OCI-LY7 (cell line): ENCODE measurements at regions of chr11 and their contacts with region 1.

Region 1: DNA sequence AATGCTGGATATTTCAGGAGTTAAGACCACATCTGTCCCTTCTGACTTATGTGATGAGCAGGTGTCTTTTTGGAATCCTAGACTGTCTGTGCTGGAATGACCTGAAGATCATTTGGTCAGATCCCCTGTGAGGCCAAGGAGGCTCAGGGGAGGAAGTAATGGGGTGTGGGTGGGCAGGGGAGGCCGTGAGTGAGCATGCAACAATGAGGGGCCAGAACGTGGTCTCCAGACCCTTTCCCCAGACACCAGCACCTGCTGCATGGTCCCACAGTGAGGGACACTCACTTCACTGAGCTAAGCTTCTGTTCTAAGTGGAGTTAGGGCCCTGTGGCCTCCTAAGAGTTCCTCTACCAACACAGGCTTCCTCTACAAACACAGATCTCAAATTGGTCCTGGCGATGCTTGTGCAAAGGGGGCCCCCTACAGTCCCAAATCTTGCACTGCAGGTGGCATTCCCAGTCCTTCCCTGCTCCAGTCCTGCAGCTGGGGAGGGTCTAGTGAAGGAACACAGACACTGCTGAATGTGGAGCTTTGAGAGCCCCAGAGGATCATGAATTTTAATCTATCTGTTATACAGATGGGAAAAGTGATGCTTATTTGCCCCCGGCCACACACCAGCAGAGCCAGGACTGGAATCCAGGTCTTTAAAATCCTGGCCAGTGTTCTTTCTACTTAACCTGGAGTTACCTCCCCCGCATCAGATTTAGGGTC is 7.4 kb downstream of the USP2 start:
- DNase-seq: peak; percentile 75
- H3K4me3 ChIP-seq: no peak overlapping the region
- H3K27ac ChIP-seq: peak overlapping the region; percentile 47
- H3K4me1 ChIP-seq: peaks cover 72% of the 10 kb centered on the region
- CTCF ChIP-seq: peak; percentile 98

Region 2: DNA sequence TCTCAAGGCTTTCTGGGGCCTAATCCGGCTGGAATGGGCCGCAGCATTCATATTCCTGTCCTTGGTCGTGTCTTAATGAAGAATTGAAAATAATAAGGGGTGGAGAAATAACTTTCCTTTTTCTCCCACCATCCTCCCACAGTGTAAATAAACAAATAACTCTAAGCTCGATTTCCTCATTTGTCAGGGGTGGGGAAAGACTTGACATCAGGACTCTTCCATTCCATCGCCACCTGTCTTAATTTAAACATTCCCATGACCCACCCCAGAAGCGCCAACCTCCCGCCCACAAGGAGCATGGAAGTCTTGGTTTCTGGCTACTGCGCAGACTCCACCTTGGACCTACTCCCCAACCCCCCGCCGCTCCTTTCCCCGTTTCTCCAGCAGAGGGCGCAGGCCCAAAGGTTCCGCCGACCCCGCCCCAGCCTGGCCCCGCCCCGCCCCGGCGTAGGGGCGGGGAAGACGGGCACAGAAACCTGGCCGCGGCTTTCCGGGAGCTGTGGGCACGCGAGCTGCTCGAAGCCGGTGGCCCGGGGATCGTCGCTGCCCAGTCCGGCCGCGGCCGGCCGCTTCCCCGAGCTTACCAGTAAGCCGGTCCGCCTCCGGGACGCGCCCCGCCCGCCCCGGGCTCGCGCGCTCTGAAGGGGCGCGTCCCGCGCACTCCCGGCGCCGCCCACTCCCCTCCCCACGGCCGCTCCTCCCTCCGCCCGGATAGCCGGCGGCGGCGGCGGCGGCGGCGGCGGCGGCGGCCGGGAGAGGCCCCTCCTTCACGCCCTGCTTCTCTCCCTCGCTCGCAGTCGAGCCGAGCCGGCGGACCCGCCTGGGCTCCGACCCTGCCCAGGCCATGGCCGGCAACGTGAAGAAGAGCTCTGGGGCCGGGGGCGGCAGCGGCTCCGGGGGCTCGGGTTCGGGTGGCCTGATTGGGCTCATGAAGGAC is 168.2 kb before region 1 on chr11 and contains the start of gene CBL:
- CTCF ChIA-PET with region 1: interaction called, 24 read pairs
- POLR2A ChIA-PET with region 1: no interaction called
- intact Hi-C with region 1: no loop called
- DNase-seq: peak; percentile 92
- H3K4me3 ChIP-seq: peak within 1 kb of the TSS; percentile 100
- H3K27ac ChIP-seq: peak within 1 kb of the TSS; percentile 78
- H3K4me1 ChIP-seq: peaks cover 31% of the 10 kb centered on the region
- CTCF ChIP-seq: peak; percentile 89
- total RNA-seq, gene CBL: 19.1 and 19.2 TPM in 2 replicates

Region 3: DNA sequence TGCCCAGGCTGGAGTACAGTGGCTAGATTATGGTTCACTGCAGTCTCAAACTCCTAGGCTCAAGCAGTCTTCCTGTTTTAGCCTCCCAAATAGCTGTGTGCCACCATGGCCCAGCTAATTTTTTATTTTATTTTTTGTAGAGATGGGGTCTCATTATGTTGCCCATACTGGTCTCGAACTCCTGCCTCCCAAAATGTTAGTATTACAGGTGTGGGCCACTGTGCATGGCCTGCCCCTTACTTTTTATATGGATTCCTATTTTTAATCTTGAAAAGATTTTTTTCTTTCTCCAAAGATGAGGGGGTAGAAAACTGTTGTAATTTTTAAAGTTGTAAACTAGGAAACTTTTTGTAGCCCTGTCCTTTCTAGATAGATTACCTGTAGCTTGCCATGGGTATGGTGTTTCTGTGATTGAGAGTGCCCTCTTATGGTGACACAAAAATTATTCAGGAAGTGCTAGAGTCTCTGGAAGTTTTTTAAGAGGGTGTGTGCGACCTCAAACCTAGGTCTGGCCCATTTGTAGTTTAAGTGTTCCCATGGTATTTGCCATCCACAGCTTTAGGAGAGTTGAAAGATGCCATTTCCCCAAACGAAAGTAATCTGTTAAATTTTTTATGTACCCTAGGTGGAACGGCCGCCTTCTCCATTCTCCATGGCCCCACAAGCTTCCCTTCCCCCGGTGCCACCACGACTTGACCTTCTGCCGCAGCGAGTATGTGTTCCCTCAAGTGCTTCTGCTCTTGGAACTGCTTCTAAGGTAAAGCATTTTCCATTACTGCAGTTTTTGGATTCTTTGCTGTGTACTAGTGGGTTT is 89.5 kb before region 1 on chr11:
- CTCF ChIA-PET with region 1: no interaction called
- POLR2A ChIA-PET with region 1: no interaction called
- intact Hi-C with region 1: no loop called
- DNase-seq: peak; percentile 74
- H3K4me3 ChIP-seq: no peak overlapping the region
- H3K27ac ChIP-seq: no peak overlapping the region
- H3K4me1 ChIP-seq: peaks cover 8% of the 10 kb centered on the region
- CTCF ChIP-seq: peak; percentile 94

Region 4: DNA sequence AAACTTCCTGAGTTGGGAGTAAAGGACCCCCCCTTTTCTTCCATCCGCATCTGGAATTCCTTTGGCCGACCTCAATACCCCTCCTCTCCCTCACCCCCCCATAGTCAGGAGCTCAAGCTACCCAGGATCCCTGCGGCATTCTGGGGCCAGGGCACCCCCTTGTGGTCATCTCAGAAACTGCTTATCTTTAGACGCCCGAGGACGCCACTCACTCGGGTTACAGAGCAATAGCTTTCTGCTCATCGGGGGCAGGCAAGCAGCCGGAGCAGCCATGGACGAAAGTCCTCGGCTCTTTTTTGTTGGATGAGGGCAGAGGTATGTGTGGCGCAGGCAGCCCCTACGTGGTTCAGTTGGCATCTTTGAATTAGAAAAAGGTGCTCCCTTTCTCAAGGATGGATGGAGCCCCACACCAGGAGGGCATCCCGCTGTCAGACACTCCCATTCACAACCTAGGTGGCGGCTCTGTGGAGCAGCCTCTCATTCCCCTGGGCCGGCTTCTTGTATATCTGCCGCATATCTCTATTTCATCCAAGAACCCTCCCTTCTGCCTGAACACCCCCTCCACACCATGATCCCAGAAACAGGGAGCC is 35.7 kb before region 1 on chr11:
- CTCF ChIA-PET with region 1: interaction called, 14 read pairs
- POLR2A ChIA-PET with region 1: interaction called, 4 read pairs
- intact Hi-C with region 1: loop called (anchors 1 kb)
- DNase-seq: peak; percentile 79
- H3K4me3 ChIP-seq: peak overlapping the region; percentile 10
- H3K27ac ChIP-seq: no peak overlapping the region
- H3K4me1 ChIP-seq: peaks cover 48% of the 10 kb centered on the region
- CTCF ChIP-seq: peak; percentile 95

Region 5: DNA sequence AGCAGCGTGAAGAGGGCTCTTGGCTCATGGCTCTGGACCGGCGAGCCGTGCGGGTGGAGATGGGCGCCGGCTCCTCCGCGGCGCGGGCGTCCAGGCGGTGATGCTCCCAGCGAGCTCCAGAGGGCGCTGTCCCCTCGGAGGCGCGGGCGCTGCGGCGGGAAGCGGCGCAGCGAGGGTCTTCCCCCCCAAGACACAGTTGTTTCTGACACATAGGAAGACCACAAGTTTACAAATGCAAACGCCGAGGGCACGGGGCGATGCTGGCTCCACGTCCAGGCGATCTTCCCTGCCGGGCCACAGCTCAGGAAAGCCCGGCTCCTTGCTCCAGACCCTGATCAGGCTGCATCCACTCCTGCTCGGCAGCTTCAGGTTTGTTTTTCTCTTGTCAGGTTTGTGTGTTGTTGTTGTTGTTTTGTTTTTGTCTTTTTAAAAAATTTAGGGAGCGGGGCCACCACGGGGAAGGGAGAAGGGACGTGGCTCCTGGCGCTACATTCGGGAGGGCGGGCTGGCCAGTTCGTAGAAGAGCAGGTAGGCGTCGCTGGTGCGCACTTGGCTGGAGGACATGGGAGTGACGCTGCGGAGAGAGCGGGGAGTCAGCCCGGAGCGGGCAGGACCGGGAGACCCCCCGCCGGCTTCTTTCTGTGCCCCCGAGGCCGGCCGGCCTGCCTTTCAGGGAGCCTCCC is 17.6 kb before region 1 on chr11:
- CTCF ChIA-PET with region 1: interaction called, 8 read pairs
- POLR2A ChIA-PET with region 1: interaction called, 26 read pairs
- intact Hi-C with region 1: loop called (anchors 1 kb)
- DNase-seq: peak; percentile 66
- H3K4me3 ChIP-seq: peak overlapping the region; percentile 27
- H3K27ac ChIP-seq: peak overlapping the region; percentile 16
- H3K4me1 ChIP-seq: peaks cover 52% of the 10 kb centered on the region
- CTCF ChIP-seq: peak; percentile 98

Region 6: GRCh38 chr11:119363851-119364590 is 10.1 kb before region 1 on chr11:
- CTCF ChIA-PET with region 1: interaction called, 8 read pairs
- POLR2A ChIA-PET with region 1: interaction called, 26 read pairs
- intact Hi-C with region 1: no loop called
- DNase-seq: peak; percentile 83
- H3K4me3 ChIP-seq: peak overlapping the region; percentile 78
- H3K27ac ChIP-seq: peak overlapping the region; percentile 83
- H3K4me1 ChIP-seq: peaks cover 86% of the 10 kb centered on the region
- CTCF ChIP-seq: peak; percentile 18; the same call in 1 of the 2 replicates